ENCODE measurements at regions of chr16 and their contacts with region 1.

Region 1: DNA sequence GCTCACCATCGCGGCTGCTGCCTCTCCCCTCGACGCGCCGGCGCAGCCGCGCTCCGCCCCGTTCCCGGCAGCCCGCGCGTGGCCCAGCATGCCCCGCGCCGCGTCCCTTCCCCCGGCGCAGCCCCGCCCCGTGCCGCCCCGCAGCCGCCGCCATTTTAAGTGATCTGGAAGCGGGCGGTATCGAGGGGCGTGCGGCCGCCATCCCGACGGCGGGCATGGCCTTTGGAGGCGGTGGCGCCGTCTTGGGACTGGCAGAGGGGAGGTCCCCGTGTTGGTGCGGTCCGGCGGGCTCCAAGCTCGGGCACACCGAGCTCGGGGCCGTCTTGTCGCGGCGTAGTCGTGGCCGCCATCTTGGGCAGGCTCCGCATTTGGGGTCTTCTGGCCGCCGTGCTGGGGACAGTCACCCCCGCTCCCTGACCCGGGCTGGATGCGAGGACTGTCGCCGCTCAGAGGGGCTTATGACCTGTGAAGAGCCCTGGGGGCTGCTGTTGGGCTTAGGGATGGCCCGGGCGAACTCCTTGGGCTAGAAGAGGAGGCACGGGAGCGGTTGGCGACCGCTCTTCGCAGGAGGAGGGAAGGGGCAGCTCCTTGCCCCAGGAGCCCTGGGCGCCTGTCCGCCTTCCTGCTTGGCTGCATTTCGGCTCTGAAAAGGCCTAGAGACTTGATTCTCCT is at the start of gene ELOB:
- DNase-seq: peak; percentile 79 to 96 (median 89)
- ATAC-seq: peak; percentile 89
- H3K4me3 ChIP-seq: peak within 1 kb of the TSS; percentile 88
- H3K4me3 Mint-ChIP-seq: peak within 1 kb of the TSS; percentile 98
- H3K27ac ChIP-seq: peak within 1 kb of the TSS; percentile 97 to 98
- H3K27ac Mint-ChIP-seq: peak within 1 kb of the TSS; percentile 100
- H3K4me1 ChIP-seq: peaks cover 49% of the 10 kb centered on the region
- H3K4me1 Mint-ChIP-seq: peaks cover 36% of the 10 kb centered on the region
- H3K27me3 ChIP-seq: no peaks in the 10 kb centered on the region
- H3K27me3 Mint-ChIP-seq: no peaks in the 10 kb centered on the region
- CTCF ChIP-seq: no peak
- total RNA-seq, gene ELOB: 102 to 103 TPM

Region 2: GRCh38 chr16:2673066-2673999 is 104.0 kb before region 1 on chr16:
- CTCF ChIA-PET with region 1: no interaction called
- POLR2A ChIA-PET with region 1: interaction called, 5 read pairs
- intact Hi-C with region 1: loop called in 1 of 2 experiments (anchors 2 kb)
- DNase-seq: peak; percentile 87 to 98 (median 94)
- ATAC-seq: peak; percentile 94
- H3K4me3 ChIP-seq: peak overlapping the region; percentile 86
- H3K4me3 Mint-ChIP-seq: peak overlapping the region; percentile 86
- H3K27ac ChIP-seq: peak overlapping the region; percentile 57 to 66
- H3K27ac Mint-ChIP-seq: peak overlapping the region; percentile 91
- H3K4me1 ChIP-seq: peaks cover 39% of the 10 kb centered on the region
- H3K4me1 Mint-ChIP-seq: peaks cover 27% of the 10 kb centered on the region
- H3K27me3 ChIP-seq: no peaks in the 10 kb centered on the region
- H3K27me3 Mint-ChIP-seq: no peaks in the 10 kb centered on the region
- CTCF ChIP-seq: no peak

Region 3: GRCh38 chr16:2720719-2721633 is 56.4 kb before region 1 on chr16:
- CTCF ChIA-PET with region 1: no interaction called
- POLR2A ChIA-PET with region 1: no interaction called
- intact Hi-C with region 1: loop called in 1 of 2 experiments (anchors 1 kb)
- DNase-seq: peak; percentile 70 to 94 (median 82)
- ATAC-seq: peak; percentile 87
- H3K4me3 ChIP-seq: peak overlapping the region; percentile 55
- H3K4me3 Mint-ChIP-seq: peak overlapping the region; percentile 81
- H3K27ac ChIP-seq: peak overlapping the region in 1 of 2 donors; percentile 35
- H3K27ac Mint-ChIP-seq: peak overlapping the region; percentile 30
- H3K4me1 ChIP-seq: peaks cover 14% of the 10 kb centered on the region
- H3K4me1 Mint-ChIP-seq: no peaks in the 10 kb centered on the region
- H3K27me3 ChIP-seq: peaks cover 0 to 2% of the 10 kb centered on the region in 2 experiments
- H3K27me3 Mint-ChIP-seq: peaks cover 10% of the 10 kb centered on the region
- CTCF ChIP-seq: peak; percentile 59

Region 4: GRCh38 chr16:2764718-2765117 is 12.6 kb before region 1 on chr16:
- CTCF ChIA-PET with region 1: no interaction called
- POLR2A ChIA-PET with region 1: interaction called, 11 read pairs
- intact Hi-C with region 1: no loop called
- DNase-seq: no peak
- ATAC-seq: no peak
- H3K4me3 ChIP-seq: no peak overlapping the region
- H3K4me3 Mint-ChIP-seq: peak overlapping the region; percentile 30
- H3K27ac ChIP-seq: no peak overlapping the region
- H3K27ac Mint-ChIP-seq: peak overlapping the region; percentile 65
- H3K4me1 ChIP-seq: peaks cover 4% of the 10 kb centered on the region
- H3K4me1 Mint-ChIP-seq: peaks cover 32% of the 10 kb centered on the region
- H3K27me3 ChIP-seq: no peaks in the 10 kb centered on the region
- H3K27me3 Mint-ChIP-seq: no peaks in the 10 kb centered on the region
- CTCF ChIP-seq: no peak

Region 5: GRCh38 chr16:2883027-2883851 is 105.9 kb after region 1 on chr16 and contains the start of gene FLYWCH2:
- CTCF ChIA-PET with region 1: no interaction called
- POLR2A ChIA-PET with region 1: interaction called, 27 read pairs
- intact Hi-C with region 1: no loop called
- DNase-seq: peak; percentile 98 to 100 (median 99)
- ATAC-seq: peak; percentile 77
- H3K4me3 ChIP-seq: peak within 1 kb of the TSS; percentile 75
- H3K4me3 Mint-ChIP-seq: peak within 1 kb of the TSS; percentile 93
- H3K27ac ChIP-seq: peak within 1 kb of the TSS; percentile 89 to 93
- H3K27ac Mint-ChIP-seq: peak within 1 kb of the TSS; percentile 99
- H3K4me1 ChIP-seq: peaks cover 16% of the 10 kb centered on the region
- H3K4me1 Mint-ChIP-seq: peaks cover 13% of the 10 kb centered on the region
- H3K27me3 ChIP-seq: no peaks in the 10 kb centered on the region
- H3K27me3 Mint-ChIP-seq: no peaks in the 10 kb centered on the region
- CTCF ChIP-seq: no peak
- total RNA-seq, gene FLYWCH2: 7.8 to 8.1 TPM

Region 6: GRCh38 chr16:3023669-3024478 is 246.5 kb after region 1 on chr16 and contains the starts of genes HCFC1R1 and THOC6:
- CTCF ChIA-PET with region 1: no interaction called
- POLR2A ChIA-PET with region 1: no interaction called
- intact Hi-C with region 1: no loop called
- DNase-seq: peak; percentile 90 to 99 (median 95)
- ATAC-seq: peak; percentile 76
- H3K4me3 ChIP-seq: peak within 1 kb of the TSS; percentile 78
- H3K4me3 Mint-ChIP-seq: peak within 1 kb of the TSS; percentile 66
- H3K27ac ChIP-seq: peak within 1 kb of the TSS; percentile 80 to 96
- H3K27ac Mint-ChIP-seq: peak within 1 kb of the TSS; percentile 78
- H3K4me1 ChIP-seq: peaks cover 77% of the 10 kb centered on the region
- H3K4me1 Mint-ChIP-seq: peaks cover 51% of the 10 kb centered on the region
- H3K27me3 ChIP-seq: peaks cover 0 to 4% of the 10 kb centered on the region in 2 experiments
- H3K27me3 Mint-ChIP-seq: peaks cover 1% of the 10 kb centered on the region
- CTCF ChIP-seq: no peak
- total RNA-seq, gene HCFC1R1: 8.9 to 11.0 TPM
- total RNA-seq, gene THOC6: 12.0 to 12.9 TPM

Measured in CD4-positive, alpha-beta T cell (primary cell).